ENCODE measurements at regions of chr2 and their contacts with region 1.

Region 1: GRCh38 chr2:121777699-121778058 is 22.2 kb downstream of the TSN start:
- DNase-seq: no peak
- H3K4me3 ChIP-seq: no peak overlapping the region
- H3K27ac ChIP-seq: no peak overlapping the region
- H3K4me1 ChIP-seq: no peaks in the 10 kb centered on the region
- H3K27me3 ChIP-seq: no peaks in the 10 kb centered on the region
- CTCF ChIP-seq: no peak
- POLR2A ChIP-seq: no peak

Region 2: DNA sequence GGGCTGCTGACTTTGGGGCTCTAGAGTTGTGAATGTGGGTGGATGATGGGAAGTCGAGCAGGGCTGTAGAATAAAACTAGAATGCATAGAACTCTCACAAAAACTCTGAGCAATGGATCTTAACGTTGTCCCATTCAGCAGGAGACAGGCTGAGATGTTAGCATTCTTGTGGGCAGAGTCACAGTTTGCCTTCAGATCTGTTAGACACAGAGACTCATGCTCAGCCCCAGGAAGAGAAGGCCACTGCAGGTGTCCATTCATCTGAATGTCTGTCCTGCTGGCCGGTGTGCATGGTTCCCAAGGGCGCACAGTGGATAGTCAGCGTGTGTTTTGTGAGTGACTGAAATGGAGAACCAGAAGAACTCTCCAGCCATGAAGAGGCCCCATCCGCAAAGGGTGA is 89.1 kb after region 1 on chr2:
- intact Hi-C with region 1: loop called (anchors 5 kb)
- DNase-seq: no peak
- H3K4me3 ChIP-seq: no peak overlapping the region
- H3K27ac ChIP-seq: no peak overlapping the region
- H3K4me1 ChIP-seq: no peaks in the 10 kb centered on the region
- H3K27me3 ChIP-seq: no peaks in the 10 kb centered on the region
- CTCF ChIP-seq: no peak
- POLR2A ChIP-seq: no peak

Measured in breast epithelium (tissue), 4 donors.